Naive thymus-derived CD4-positive, alpha-beta T cell (primary cell): ENCODE measurements at regions of chr16 and their contacts with region 1.

Region 1: DNA sequence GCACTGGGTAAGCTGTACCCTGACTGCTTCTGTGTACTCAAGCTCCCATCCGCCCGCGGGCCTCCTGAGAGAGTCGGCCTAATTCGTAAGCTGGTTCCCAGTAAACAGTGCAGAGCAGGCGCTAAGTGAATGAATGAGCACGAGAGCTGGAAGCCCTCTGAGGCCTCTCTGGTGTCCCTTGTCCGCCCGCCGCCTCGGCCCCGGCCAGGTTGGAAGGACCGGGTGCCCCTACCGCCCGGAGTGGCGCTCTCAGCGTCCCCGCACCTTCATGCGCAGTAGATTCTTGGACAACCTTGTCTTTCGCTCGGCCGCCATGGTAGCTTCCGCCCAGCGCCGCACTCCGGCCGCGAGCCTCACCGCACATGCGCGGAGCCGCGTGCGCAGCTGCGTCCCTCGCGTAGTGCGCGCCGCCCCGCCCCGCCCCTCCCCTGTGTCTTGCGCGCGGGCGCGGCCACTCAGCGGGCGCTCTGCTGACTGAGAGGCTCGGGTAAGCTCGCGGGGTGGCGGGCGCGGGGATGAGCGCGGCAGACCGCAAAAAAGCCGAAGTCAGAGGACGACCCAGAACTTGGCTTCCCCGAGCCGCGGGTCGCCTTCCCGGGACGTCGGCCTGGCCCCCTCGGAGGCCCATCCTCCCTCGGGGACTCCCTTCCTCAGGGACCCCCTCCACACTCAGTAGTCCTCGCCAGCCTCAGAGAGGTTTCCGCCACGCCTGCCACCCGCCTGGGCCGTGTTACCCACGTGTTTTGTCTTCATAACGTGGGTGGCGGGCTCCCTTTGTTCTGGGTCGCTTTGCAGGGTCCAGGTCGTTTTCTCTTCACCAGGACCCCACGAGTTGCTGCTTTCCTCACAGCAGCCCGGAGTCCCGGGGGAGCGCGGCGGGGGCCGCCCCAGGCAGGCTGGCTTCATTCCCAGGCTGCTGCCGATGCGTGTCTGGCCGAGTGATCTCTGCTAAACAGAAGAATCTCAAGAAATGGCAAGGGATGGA is at the start of gene MPHOSPH6:
- DNase-seq: peak; percentile 84 to 91 (median 88)
- ATAC-seq: peak; percentile 98
- H3K4me3 ChIP-seq: peak within 1 kb of the TSS; percentile 77
- H3K4me3 Mint-ChIP-seq: peak within 1 kb of the TSS; percentile 80 to 97 (median 95)
- H3K27ac ChIP-seq: peak within 1 kb of the TSS; percentile 84
- H3K27ac Mint-ChIP-seq: peak within 1 kb of the TSS; percentile 78 to 98 (median 96)
- H3K4me1 ChIP-seq: peaks cover 9 to 12% of the 10 kb centered on the region in 2 donors
- H3K4me1 Mint-ChIP-seq: peaks cover 18 to 38% (median 32%) of the 10 kb centered on the region in 7 donors
- H3K27me3 ChIP-seq: peaks cover 6% of the 10 kb centered on the region in 2 donors
- H3K27me3 Mint-ChIP-seq: peaks cover 8 to 41% (median 28%) of the 10 kb centered on the region in 5 donors
- total RNA-seq, gene MPHOSPH6: 15.6 to 30.4 (median 23.3) TPM

Region 2: DNA sequence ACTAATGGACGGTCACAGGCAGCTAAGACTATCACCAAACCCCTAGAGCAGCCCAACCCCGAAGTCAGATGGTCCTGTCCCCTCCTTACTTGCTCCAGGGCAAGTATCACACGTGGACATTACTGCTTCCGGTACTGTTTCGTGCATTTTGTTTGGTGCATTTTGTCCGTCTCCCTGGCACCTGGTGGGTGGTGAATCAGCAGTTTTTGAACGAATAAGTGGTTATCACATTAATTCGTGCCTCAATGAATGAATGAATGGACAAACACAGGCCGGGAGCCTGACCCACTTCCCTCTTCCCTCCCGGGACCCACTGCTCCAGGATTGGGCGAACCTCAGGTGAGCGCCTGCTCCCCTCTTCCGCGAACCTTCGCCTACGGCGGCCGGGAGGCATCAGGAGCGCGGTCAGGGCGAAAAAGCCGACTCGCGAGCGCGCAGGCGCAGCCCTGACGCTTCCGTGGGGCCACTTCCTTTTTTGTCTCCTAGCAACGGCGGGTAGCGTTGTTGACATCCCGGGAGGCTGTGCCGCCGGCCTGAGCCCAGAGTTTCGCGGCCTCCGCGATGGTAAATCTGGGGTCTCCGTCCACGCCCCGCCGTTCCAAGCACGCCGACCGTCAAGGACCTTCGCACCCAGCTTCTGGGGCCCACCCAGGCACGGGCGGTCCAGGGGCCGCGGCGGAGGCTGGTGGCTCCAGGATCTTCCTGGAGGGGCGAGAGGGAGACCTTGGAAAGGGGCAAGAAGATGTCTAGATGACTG is 1629.5 kb before region 1 on chr16 and contains the start of gene DYNLRB2:
- CTCF ChIA-PET with region 1: no interaction called
- POLR2A ChIA-PET with region 1: no interaction called
- intact Hi-C with region 1: loop called in 1 of 2 experiments (anchors 2 kb)
- DNase-seq: peak; percentile 82 to 94 (median 93)
- ATAC-seq: peak; percentile 94
- H3K4me3 ChIP-seq: peak within 1 kb of the TSS; percentile 94
- H3K4me3 Mint-ChIP-seq: peak within 1 kb of the TSS; percentile 93 to 98 (median 96)
- H3K27ac ChIP-seq: peak within 1 kb of the TSS; percentile 77
- H3K27ac Mint-ChIP-seq: peak within 1 kb of the TSS; percentile 96 to 99 (median 97)
- H3K4me1 ChIP-seq: peaks cover 6 to 13% of the 10 kb centered on the region in 2 donors
- H3K4me1 Mint-ChIP-seq: peaks cover 16 to 33% (median 19%) of the 10 kb centered on the region in 7 donors
- H3K27me3 ChIP-seq: no peaks in the 10 kb centered on the region
- H3K27me3 Mint-ChIP-seq: peaks cover 0 to 9% (median 3%) of the 10 kb centered on the region in 5 donors
- total RNA-seq, gene DYNLRB2: 0.92 to 1.2 TPM in 2 of 5 experiments, not detected in the others

Region 3: GRCh38 chr16:82011199-82011641 is 158.9 kb before region 1 on chr16 and contains the start of gene SDR42E1:
- CTCF ChIA-PET with region 1: no interaction called
- POLR2A ChIA-PET with region 1: no interaction called
- intact Hi-C with region 1: loop called in 1 of 2 experiments (anchors 1 kb)
- DNase-seq: peak; percentile 37 to 80 (median 68)
- ATAC-seq: peak; percentile 93
- H3K4me3 ChIP-seq: peak within 1 kb of the TSS; percentile 75
- H3K4me3 Mint-ChIP-seq: peak within 1 kb of the TSS; percentile 80 to 99 (median 91)
- H3K27ac ChIP-seq: peak within 1 kb of the TSS; percentile 67
- H3K27ac Mint-ChIP-seq: peak within 1 kb of the TSS; percentile 77 to 96 (median 89)
- H3K4me1 ChIP-seq: no peaks in the 10 kb centered on the region
- H3K4me1 Mint-ChIP-seq: peaks cover 12 to 28% (median 22%) of the 10 kb centered on the region in 7 donors
- H3K27me3 ChIP-seq: peaks cover 0 to 5% of the 10 kb centered on the region in 2 donors
- H3K27me3 Mint-ChIP-seq: peaks cover 12 to 30% (median 13%) of the 10 kb centered on the region in 5 donors
- total RNA-seq, gene SDR42E1: 4.1 to 12.1 (median 8.2) TPM

Region 4: GRCh38 chr16:82192665-82193064 is 22.5 kb after region 1 on chr16:
- CTCF ChIA-PET with region 1: interaction called, 4 read pairs
- POLR2A ChIA-PET with region 1: interaction called, 3 read pairs
- intact Hi-C with region 1: loop called (anchors 1 kb)
- DNase-seq: peak in 6 of 9 donors; percentile 2 to 48 (median 20)
- ATAC-seq: peak; percentile 93
- H3K4me3 ChIP-seq: no peak overlapping the region
- H3K4me3 Mint-ChIP-seq: peak overlapping the region in 5 of 10 donors; percentile 9 to 70 (median 14)
- H3K27ac ChIP-seq: no peak overlapping the region
- H3K27ac Mint-ChIP-seq: peak overlapping the region; percentile 4 to 91 (median 66)
- H3K4me1 ChIP-seq: peaks cover 0 to 3% of the 10 kb centered on the region in 2 donors
- H3K4me1 Mint-ChIP-seq: peaks cover 11 to 19% (median 13%) of the 10 kb centered on the region in 7 donors
- H3K27me3 ChIP-seq: no peaks in the 10 kb centered on the region
- H3K27me3 Mint-ChIP-seq: peaks cover 4 to 18% (median 8%) of the 10 kb centered on the region in 5 donors

Region 5: DNA sequence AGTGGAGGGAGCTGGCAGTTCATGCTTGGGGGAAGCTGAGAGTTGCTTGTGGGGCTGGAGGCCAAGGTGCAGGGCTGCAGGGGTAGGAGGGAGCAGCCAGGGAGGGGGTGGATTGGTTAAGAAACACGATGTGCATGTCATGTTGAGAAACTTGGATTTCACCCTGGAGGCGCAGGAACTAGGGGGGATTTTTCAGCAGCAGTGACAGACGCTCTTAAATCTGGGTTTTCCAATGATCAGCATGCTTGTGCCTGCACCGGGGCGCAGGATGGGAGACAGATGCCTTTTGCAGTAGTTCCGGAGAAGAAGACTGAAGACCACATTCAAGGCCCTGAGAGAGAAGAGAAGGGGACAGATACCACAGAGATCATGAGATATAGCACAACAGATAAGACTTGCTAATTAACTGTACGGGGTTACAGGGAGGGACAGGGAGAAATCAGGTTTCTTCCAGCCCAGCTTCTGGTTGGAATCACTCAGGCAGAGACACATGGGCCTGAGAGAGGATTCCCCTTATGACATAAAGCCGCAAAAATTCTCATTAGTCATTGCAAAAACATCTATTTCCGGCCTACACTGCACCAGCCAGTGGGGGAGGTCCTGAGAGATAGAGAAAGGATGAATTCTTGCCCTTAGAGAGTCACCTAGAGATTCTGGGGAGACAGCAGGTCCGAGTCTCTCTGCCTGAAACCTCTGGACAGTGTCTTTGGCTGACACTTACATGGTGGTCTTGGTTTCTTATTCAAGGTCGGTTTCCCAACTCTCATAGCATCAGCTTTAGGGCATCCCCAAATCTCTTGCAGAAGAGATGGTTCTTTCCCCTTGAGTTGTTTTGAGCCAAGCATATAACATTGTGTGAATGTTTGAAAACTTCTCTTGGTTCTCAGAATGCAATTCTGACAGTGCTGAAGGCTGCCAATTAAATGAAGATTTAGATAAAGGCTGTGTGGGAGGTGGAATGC is 483.7 kb after region 1 on chr16:
- CTCF ChIA-PET with region 1: no interaction called
- POLR2A ChIA-PET with region 1: no interaction called
- intact Hi-C with region 1: loop called (anchors 10 kb)
- DNase-seq: peak in 8 of 9 donors; percentile 11 to 54 (median 36)
- ATAC-seq: peak; percentile 70
- H3K4me3 ChIP-seq: peak overlapping the region; percentile 2
- H3K4me3 Mint-ChIP-seq: peak overlapping the region; percentile 27 to 77 (median 62)
- H3K27ac ChIP-seq: peak overlapping the region; percentile 57
- H3K27ac Mint-ChIP-seq: peak overlapping the region; percentile 48 to 95 (median 87)
- H3K4me1 ChIP-seq: peaks cover 71 to 88% of the 10 kb centered on the region in 2 donors
- H3K4me1 Mint-ChIP-seq: peaks cover 43 to 97% (median 84%) of the 10 kb centered on the region in 7 donors
- H3K27me3 ChIP-seq: no peaks in the 10 kb centered on the region
- H3K27me3 Mint-ChIP-seq: no peaks in the 10 kb centered on the region